GM12878 (cell line): ENCODE measurements at regions of chr7 and their contacts with region 1.

Region 1: GRCh38 chr7:92968502-92968901 is 132.1 kb upstream of the CDK6 start:
- DNase-seq: peak; percentile 15
- ATAC-seq: peak; percentile 87
- H3K4me3 ChIP-seq: no peak overlapping the region
- H3K27ac ChIP-seq: no peak overlapping the region
- H3K4me1 ChIP-seq: no peaks in the 10 kb centered on the region
- H3K27me3 ChIP-seq: no peaks in the 10 kb centered on the region
- CTCF ChIP-seq: no peak
- EP300 ChIP-seq: no peak; a peak in 1 of 4 replicates
- POLR2A ChIP-seq: no peak
- RAD21 ChIP-seq: 0 out of 2 replicates have a peak, but pooled peaks have one; percentile 4

Region 2: DNA sequence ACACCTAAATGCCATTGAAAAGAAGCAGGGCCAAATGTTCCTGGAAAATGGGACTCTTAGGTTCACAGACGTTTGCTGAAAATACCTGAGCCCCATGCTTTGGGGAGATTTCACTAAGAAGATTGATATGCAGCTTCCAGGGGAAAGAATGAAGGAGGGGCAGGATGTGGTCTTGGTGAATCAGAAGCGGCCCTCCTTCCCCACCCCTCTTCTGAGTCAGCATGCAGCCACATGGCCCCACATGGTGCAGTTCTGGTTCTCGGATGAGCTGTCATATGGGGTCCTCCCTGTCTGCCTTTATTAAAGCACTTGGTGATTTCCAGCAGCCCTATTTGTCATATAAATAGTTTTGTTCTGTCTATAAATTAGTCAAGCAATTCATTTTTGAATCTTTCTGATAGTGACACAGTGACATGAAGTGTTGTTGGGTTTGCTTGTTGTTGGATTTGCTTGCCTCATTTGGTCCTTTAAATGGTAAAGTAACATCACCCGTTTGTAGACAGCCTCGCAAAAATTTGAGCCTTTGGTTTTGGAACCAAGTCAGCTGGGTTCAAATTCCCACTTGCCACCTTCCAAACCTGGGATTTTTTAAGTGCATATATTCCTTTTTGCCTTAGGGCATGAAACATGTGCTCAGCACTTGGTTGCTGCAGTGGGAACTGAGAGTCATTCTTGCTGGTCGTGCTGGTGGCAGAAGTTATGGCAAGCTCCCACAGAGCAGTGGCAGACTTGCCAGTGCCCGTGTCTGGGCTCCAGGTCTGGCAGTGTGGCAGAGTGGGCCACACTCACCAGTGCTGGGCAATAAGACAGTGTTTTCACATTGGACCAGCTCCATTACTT is 64.0 kb before region 1 on chr7:
- CTCF ChIA-PET with region 1: no interaction called
- POLR2A ChIA-PET with region 1: no interaction called
- RAD21 ChIA-PET with region 1: interaction called, 3 read pairs
- SMC1A ChIA-PET with region 1: no interaction called
- in situ Hi-C with region 1: no loop called
- intact Hi-C with region 1: loop called (anchors 2 kb)
- DNase-seq: peak; percentile 84
- ATAC-seq: peak; percentile 99
- H3K4me3 ChIP-seq: peak overlapping the region; percentile 4; the same call in 1 of the 2 replicates
- H3K27ac ChIP-seq: peak overlapping the region; percentile 80
- H3K4me1 ChIP-seq: peaks cover 8% of the 10 kb centered on the region
- H3K27me3 ChIP-seq: no peaks in the 10 kb centered on the region
- CTCF ChIP-seq: no peak
- EP300 ChIP-seq: peak; percentile 80 to 92
- POLR2A ChIP-seq: no peak
- RAD21 ChIP-seq: no peak

Region 3: GRCh38 chr7:93046641-93047040 is 78.1 kb after region 1 on chr7:
- CTCF ChIA-PET with region 1: interaction called, 3 read pairs
- POLR2A ChIA-PET with region 1: no interaction called
- RAD21 ChIA-PET with region 1: no interaction called
- SMC1A ChIA-PET with region 1: interaction called, 3 read pairs
- in situ Hi-C with region 1: no loop called
- intact Hi-C with region 1: loop called (anchors 5 kb)
- DNase-seq: no peak
- ATAC-seq: peak; percentile 29
- H3K4me3 ChIP-seq: no peak overlapping the region
- H3K27ac ChIP-seq: no peak overlapping the region
- H3K4me1 ChIP-seq: peaks cover 7% of the 10 kb centered on the region
- H3K27me3 ChIP-seq: no peaks in the 10 kb centered on the region
- CTCF ChIP-seq: no peak
- EP300 ChIP-seq: no peak
- POLR2A ChIP-seq: no peak
- RAD21 ChIP-seq: no peak